Activated B cell treated with CpG ODN at 0.5 μM for 24 hours (primary cell): ENCODE measurements at regions of chr19 and their contacts with region 1.

Region 1: GRCh38 chr19:16829010-16829821 is at the start of gene SIN3B:
- DNase-seq: peak; percentile 95
- ATAC-seq: peak; percentile 88
- H3K4me3 Mint-ChIP-seq: peak within 1 kb of the TSS; percentile 86
- H3K27ac Mint-ChIP-seq: peak within 1 kb of the TSS; percentile 77
- H3K4me1 Mint-ChIP-seq: peaks cover 46% of the 10 kb centered on the region
- H3K27me3 Mint-ChIP-seq: peaks cover 28% of the 10 kb centered on the region
- CTCF ChIP-seq: no peak
- total RNA-seq, gene SIN3B: 63.7 and 73.1 TPM in 2 replicates

Region 2: DNA sequence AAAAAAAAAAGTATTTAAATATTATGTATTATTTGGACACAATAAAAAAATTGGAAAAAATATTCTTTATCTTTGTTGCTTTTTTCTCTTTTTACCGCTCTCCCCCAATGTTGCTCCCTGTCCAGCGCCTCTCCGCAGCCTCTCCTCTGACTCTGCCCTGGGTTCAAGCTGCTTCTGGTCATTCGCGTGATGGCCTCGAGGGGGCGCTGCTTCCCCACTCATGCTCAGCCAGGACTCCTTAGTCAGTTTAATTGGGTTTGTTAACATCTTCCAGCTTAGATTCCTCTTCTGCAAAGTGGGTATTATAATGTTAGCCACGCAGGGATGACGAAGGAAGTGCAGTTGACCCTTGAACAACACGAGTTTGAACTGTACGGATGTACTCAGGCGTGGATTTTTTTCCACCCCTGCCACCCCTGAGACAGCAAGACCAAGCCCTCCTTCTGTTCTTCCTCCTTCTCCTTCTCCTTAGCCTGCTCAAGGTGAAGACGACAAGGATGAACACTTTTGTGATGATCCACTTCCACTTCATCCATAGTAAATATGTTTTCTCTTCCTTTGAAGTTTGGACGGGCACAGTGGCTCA is 114.4 kb before region 1 on chr19:
- CTCF ChIA-PET with region 1: interaction called, 5 read pairs
- POLR2A ChIA-PET with region 1: no interaction called
- intact Hi-C with region 1: loop called (anchors 5 kb)
- DNase-seq: peak; percentile 47
- ATAC-seq: peak; percentile 20
- H3K4me3 Mint-ChIP-seq: peak overlapping the region; percentile 42
- H3K27ac Mint-ChIP-seq: peak overlapping the region; percentile 81
- H3K4me1 Mint-ChIP-seq: peaks cover 54% of the 10 kb centered on the region
- H3K27me3 Mint-ChIP-seq: no peaks in the 10 kb centered on the region
- CTCF ChIP-seq: peak; percentile 94

Region 3: DNA sequence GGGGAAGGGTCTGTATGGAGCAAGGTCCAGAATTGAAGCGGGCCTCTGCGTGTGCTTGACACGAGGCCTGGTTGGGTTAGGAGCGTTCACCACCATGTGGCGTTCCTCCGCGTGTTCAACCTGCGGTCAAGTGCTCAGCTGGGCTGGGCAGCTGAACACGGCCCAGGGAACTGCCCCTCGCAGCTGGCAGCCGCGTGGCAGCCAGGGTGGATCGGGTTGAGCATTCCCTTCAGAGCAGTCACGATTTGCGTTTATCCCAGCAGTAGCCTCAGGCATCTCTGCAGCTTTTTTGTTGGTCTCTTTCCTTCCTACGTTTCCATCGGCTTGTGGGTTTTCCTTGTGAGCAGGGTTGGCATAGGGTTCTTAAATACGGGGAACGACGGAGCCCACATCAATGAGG is 30.9 kb after region 1 on chr19:
- CTCF ChIA-PET with region 1: no interaction called
- POLR2A ChIA-PET with region 1: no interaction called
- intact Hi-C with region 1: no loop called
- DNase-seq: no peak
- ATAC-seq: no peak
- H3K4me3 Mint-ChIP-seq: no peak overlapping the region
- H3K27ac Mint-ChIP-seq: no peak overlapping the region
- H3K4me1 Mint-ChIP-seq: peaks cover 11% of the 10 kb centered on the region
- H3K27me3 Mint-ChIP-seq: no peaks in the 10 kb centered on the region
- CTCF ChIP-seq: no peak